Gastrocnemius medialis (tissue), 4 donors: ENCODE measurements at regions of chr10 and their contacts with region 1.

Region 1: DNA sequence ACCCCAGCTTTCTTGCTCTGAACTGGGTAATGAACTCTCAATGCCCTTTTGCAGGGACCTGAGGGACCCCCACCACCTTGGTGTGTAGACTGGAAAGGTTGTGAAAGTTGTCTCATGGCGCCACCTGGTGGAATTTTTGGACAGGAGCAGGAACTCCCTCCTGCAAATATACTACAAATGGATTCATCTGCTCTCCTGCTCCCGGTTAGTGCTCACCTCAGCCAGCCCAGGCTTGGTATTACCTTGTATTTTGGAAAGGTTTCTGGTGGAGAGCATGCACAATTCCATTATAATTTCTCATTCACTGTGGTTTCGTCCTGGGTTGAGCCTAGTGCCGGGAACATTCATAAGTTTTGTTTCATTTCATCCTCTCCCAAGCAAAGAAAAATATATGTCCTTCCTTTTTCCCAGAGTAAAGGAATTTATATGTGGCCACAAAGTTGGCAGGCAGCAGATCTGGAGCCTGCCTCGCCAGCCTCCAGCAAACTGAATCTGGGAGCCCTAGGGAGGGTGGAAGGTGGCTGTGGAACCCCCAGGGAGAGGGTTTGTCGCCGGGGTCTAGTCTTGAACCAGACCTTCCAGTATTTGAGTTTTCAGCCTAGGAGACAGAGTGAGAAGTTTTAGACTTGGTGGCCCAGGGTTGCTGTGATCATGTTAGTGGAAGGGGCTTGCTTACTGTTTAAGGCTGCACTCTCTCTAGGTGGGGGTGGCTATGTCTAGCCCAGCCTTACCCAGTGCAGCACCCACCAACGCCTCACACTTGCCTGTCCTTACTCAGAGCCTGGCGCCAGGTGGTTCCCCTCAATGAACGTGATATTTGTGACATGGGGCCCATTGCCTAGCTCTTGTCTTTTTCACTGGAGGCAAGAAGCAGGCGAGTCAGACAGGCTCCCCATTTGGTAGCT is 9.5 kb downstream of the FAM241B start:
- DNase-seq: peak; percentile 26 to 44
- ATAC-seq: peak; percentile 71 to 78
- H3K4me3 ChIP-seq: no peak overlapping the region
- H3K27ac ChIP-seq: no peak overlapping the region
- H3K4me1 ChIP-seq: no peaks in the 10 kb centered on the region
- H3K27me3 ChIP-seq: no peaks in the 10 kb centered on the region
- CTCF ChIP-seq: peak; percentile 74 to 89 (median 79)
- POLR2A ChIP-seq: no peak

Region 2: DNA sequence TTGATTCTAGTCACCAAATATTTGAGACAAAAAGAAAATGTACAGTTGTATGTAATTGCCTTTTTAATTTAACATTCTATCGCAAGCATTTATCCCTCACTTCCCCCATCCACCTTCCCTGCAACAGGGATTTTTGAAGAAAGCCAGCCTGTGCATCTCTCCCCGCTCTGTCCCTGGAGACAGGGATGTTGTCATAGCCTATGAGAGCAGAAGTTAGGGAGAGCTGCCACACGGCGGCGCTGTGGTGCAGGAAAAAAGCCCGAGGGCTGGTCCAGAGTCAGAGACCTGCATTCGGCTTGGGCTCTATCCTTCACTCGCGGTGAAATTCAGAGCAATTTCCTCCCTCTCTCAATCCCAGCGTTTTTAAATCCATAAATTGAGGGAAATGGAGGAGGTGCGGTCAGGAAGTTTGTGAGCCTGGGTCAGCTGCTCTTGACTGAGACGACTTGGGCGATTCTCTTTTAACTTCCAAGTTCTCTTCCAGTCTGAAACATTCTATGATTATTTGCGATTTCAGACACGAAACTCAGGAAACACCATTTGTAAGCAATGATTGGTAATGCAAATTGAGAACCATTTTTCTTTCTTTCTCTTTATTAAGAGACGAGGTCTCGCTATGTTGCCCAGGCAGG is 401.9 kb before region 1 on chr10:
- in situ Hi-C with region 1: loop called in 2 of 4 experiments (anchors 25 kb)
- intact Hi-C with region 1: no loop called
- DNase-seq: peak; percentile 59 to 79
- ATAC-seq: peak; percentile 97 to 99
- H3K4me3 ChIP-seq: no peak overlapping the region
- H3K27ac ChIP-seq: no peak overlapping the region
- H3K4me1 ChIP-seq: no peaks in the 10 kb centered on the region
- H3K27me3 ChIP-seq: no peaks in the 10 kb centered on the region
- CTCF ChIP-seq: peak; percentile 82 to 97 (median 96)
- POLR2A ChIP-seq: no peak

Region 3: DNA sequence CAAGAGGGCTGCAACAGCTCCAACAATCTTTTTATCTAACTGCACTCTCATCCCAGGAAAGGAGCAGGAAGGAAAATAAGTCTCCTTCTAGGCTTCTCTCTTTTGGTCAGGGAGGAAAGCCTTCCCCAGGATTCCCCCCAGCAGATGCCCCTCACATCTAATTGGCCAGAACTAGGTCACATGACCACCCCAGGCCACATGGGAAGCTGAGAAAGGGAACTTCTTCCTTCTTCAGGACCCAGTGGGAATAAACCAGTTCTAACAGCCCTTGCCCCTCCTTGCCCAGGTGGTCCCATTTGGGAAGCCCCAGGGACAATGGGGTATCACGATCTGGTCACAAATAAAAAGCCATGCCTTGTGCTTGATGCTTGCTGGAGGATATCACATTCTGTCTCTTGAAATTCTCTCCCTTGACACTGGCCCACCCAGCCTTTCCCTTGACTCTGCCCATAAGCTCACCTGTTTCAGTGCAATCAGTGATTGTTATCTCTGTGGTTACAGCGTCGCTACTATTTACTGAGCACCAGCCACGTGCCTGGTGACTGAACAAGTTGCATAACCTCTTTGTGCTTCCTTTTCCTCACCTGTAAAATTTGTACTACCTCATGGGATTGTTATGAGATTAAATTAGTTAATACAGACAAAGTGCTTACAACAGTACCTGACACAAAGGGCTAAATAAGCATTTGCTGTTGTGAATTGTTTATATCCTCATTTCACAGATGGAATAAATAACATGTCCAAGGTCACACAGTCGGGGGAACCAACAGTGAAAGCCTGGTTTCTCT is 213.8 kb before region 1 on chr10:
- in situ Hi-C with region 1: loop called (anchors 10 to 25 kb)
- intact Hi-C with region 1: loop called (anchors 5 kb)
- DNase-seq: peak in 1 of 2 donors; percentile 2
- ATAC-seq: no peak
- H3K4me3 ChIP-seq: no peak overlapping the region
- H3K27ac ChIP-seq: peak overlapping the region in 1 of 4 donors; percentile 30
- H3K4me1 ChIP-seq: peaks cover 0 to 5% of the 10 kb centered on the region in 2 donors
- H3K27me3 ChIP-seq: no peaks in the 10 kb centered on the region
- CTCF ChIP-seq: no peak
- POLR2A ChIP-seq: no peak

Region 4: GRCh38 chr10:69451209-69451783 is 188.2 kb before region 1 on chr10 and contains the start of gene TSPAN15:
- in situ Hi-C with region 1: loop called in 1 of 4 experiments (anchors 25 kb)
- intact Hi-C with region 1: no loop called
- DNase-seq: peak; percentile 86 to 89
- ATAC-seq: peak; percentile 77 to 82
- H3K4me3 ChIP-seq: peak within 1 kb of the TSS; percentile 83 to 95 (median 93)
- H3K27ac ChIP-seq: peak within 1 kb of the TSS; percentile 87 to 95 (median 90)
- H3K4me1 ChIP-seq: peaks cover 49 to 59% of the 10 kb centered on the region in 2 donors
- H3K27me3 ChIP-seq: no peaks in the 10 kb centered on the region
- CTCF ChIP-seq: no peak
- POLR2A ChIP-seq: peak; percentile 94
- total RNA-seq, gene TSPAN15: 7.9 to 21.0 (median 11.8) TPM

Region 5: DNA sequence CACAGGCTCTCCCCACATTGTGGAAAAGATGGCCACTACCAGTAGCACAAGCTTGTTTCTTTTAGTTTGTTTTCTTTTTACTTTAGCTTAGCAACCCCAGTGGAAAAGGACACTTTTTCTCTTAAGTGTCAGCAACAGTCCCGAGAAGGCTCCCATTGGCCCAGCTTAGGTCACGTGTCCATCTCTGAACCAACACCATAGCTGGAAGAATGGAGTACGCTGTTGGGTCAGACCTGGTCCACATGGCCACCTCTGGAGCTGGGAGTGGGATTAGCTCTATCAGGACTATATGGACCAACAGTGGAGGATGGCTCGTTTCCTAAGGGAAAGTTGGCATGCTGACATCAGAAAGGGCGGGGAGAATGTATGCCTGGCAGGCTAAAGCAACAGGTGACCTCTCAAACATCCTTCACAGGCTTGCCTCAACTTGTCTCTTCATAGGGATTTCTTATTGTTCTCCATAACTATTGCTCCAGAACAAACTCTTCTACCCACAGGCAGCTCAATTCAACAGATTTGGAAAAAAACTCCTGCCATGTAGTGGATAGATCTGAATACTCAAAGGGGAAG is 38.7 kb before region 1 on chr10:
- in situ Hi-C with region 1: no loop called
- intact Hi-C with region 1: no loop called
- DNase-seq: no peak
- ATAC-seq: no peak
- H3K4me3 ChIP-seq: no peak overlapping the region
- H3K27ac ChIP-seq: no peak overlapping the region
- H3K4me1 ChIP-seq: no peaks in the 10 kb centered on the region
- H3K27me3 ChIP-seq: peaks cover 0 to 17% (median 12%) of the 10 kb centered on the region in 3 donors
- CTCF ChIP-seq: no peak
- POLR2A ChIP-seq: no peak

Region 6: DNA sequence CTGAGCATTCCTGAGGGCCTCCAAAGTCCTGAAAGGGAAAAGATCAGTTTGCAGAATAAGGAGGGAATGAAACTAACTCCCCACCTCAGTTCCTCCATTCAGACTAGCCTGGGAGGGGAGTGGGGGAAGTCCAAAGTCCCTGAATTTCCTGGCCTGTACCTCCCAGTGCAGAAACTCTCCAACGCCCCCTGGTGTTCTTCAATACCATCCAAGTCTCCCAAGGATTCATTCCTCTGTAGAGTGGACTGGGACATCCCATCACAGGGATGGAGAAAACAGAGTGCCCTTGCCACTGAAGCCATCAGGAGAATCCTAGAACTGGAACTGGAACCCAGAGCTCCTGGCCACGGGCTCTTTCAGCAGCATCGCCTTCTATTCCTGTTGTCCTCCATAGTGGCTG is 160.6 kb after region 1 on chr10:
- in situ Hi-C with region 1: no loop called
- intact Hi-C with region 1: loop called (anchors 10 kb)
- DNase-seq: no peak
- ATAC-seq: peak; percentile 17 to 28
- H3K4me3 ChIP-seq: no peak overlapping the region
- H3K27ac ChIP-seq: no peak overlapping the region
- H3K4me1 ChIP-seq: peaks cover 10 to 12% of the 10 kb centered on the region in 2 donors
- H3K27me3 ChIP-seq: no peaks in the 10 kb centered on the region
- CTCF ChIP-seq: peak; percentile 21 to 69 (median 43)
- POLR2A ChIP-seq: no peak

Region 7: GRCh38 chr10:69819716-69820506 is 180.4 kb after region 1 on chr10:
- in situ Hi-C with region 1: no loop called
- intact Hi-C with region 1: no loop called
- DNase-seq: no peak
- ATAC-seq: no peak
- H3K4me3 ChIP-seq: no peak overlapping the region
- H3K27ac ChIP-seq: no peak overlapping the region
- H3K4me1 ChIP-seq: peaks cover 1 to 3% of the 10 kb centered on the region in 2 donors
- H3K27me3 ChIP-seq: no peaks in the 10 kb centered on the region
- CTCF ChIP-seq: no peak
- POLR2A ChIP-seq: no peak

Region 8: GRCh38 chr10:70093335-70093944 is 453.9 kb after region 1 on chr10:
- in situ Hi-C with region 1: no loop called
- intact Hi-C with region 1: no loop called
- DNase-seq: no peak
- ATAC-seq: no peak
- H3K4me3 ChIP-seq: no peak overlapping the region
- H3K27ac ChIP-seq: no peak overlapping the region
- H3K4me1 ChIP-seq: no peaks in the 10 kb centered on the region
- H3K27me3 ChIP-seq: no peaks in the 10 kb centered on the region
- CTCF ChIP-seq: no peak
- POLR2A ChIP-seq: no peak